PC-9 (cell line): ENCODE measurements at regions of chr1 and their contacts with region 1.

Region 1: DNA sequence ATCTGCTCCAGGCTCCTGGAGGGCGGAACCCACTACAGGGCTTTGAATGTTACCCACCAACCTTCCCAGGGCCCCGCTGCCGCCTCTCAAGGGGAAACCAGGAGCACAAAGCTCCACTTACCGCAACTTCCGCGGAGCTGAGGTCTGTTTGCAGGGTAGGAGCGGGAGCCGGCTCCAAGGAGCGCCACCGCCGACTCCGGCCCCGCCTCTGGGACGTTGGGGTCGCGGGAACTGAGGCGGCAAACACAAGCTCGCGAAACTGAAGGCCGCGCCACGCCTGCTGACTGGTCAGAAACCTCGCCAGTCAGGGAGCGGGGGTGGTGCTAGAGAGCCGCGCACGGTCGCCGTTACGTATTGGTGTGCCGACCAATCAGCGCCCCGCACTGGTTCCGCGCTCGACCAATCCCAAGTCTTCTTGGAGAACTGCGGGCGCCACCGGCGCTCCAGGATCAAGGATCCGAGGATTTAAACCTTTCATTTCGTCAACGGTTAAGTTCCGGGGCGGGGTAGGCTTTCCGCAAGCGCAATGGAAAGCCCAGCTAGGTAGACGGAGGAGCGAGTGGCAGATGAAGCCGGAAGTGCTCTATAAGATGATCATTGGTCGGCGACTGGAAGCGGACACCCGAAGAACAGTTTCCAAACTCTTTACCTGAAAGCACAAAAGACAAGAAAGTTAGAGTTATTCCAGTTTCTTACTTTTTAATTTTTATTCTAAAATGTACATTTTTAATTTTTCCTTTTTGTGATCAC is at the start of gene STIL:
- DNase-seq: peak; percentile 99
- H3K4me3 ChIP-seq: peak within 1 kb of the TSS; percentile 67
- H3K27ac ChIP-seq: peak within 1 kb of the TSS; percentile 87
- H3K4me1 ChIP-seq: peaks cover 12% of the 10 kb centered on the region
- H3K27me3 ChIP-seq: no peaks in the 10 kb centered on the region
- CTCF ChIP-seq: no peak
- total RNA-seq, gene STIL: 35.8 and 37.0 TPM in 2 replicates

Region 2: GRCh38 chr1:47333922-47334764 is 20.1 kb after region 1 on chr1:
- CTCF ChIA-PET with region 1: interaction called, 6 read pairs
- POLR2A ChIA-PET with region 1: interaction called, 38 read pairs
- intact Hi-C with region 1: loop called (anchors 1 kb)
- DNase-seq: peak; percentile 62 to 77
- H3K4me3 ChIP-seq: peak overlapping the region; percentile 96
- H3K27ac ChIP-seq: peak overlapping the region; percentile 93
- H3K4me1 ChIP-seq: peaks cover 30% of the 10 kb centered on the region
- H3K27me3 ChIP-seq: no peaks in the 10 kb centered on the region
- CTCF ChIP-seq: no peak; the same call in 1 of the 2 replicates

Region 3: DNA sequence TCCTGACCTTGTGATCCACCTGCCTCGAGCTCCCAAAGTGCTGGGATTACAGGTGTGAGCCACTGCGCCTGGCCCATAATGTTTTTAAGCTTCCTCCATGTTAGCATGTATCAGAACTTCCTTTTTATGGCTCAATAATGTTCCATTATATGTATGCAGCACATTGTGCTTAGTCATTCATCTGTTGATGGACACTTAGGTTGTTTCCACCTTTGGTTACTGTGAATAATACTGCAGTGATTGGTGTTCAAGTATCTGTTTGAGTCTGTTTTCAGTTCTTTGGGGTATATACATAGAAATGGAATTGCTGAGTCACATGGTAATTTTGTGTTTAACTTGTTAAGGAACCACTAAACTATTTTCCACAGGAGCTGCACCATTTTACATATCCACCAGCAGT is 37.2 kb after region 1 on chr1:
- CTCF ChIA-PET with region 1: no interaction called
- POLR2A ChIA-PET with region 1: interaction called, 10 read pairs
- intact Hi-C with region 1: no loop called
- DNase-seq: no peak
- H3K4me3 ChIP-seq: no peak overlapping the region
- H3K27ac ChIP-seq: peak overlapping the region; percentile 52
- H3K4me1 ChIP-seq: 0 out of 2 replicates have a peak, but pooled peaks cover 4% of the 10 kb centered on the region
- H3K27me3 ChIP-seq: no peaks in the 10 kb centered on the region
- CTCF ChIP-seq: no peak

Region 4: DNA sequence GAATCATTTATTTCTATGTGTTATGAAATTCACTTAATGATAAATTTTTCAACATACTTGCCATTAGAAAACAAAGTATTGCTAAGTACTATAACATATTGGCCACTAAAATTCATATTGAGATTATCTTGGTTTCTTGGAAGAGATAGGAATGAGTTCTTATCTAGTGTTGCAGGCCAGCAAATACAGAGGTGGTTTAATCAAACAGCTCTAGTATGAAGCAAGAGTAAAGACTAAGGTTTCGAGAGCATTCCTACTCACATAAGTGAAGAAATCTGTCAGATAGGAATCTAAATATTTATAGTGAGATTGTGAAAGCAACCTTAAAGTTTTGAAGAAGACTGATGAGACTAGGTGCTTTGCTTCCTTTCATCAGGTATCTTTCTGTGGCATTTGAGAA is 64.1 kb after region 1 on chr1:
- CTCF ChIA-PET with region 1: no interaction called
- POLR2A ChIA-PET with region 1: no interaction called
- intact Hi-C with region 1: loop called (anchors 5 kb)
- DNase-seq: no peak
- H3K4me3 ChIP-seq: no peak overlapping the region
- H3K27ac ChIP-seq: no peak overlapping the region
- H3K4me1 ChIP-seq: no peaks in the 10 kb centered on the region
- H3K27me3 ChIP-seq: no peaks in the 10 kb centered on the region
- CTCF ChIP-seq: no peak

Region 5: DNA sequence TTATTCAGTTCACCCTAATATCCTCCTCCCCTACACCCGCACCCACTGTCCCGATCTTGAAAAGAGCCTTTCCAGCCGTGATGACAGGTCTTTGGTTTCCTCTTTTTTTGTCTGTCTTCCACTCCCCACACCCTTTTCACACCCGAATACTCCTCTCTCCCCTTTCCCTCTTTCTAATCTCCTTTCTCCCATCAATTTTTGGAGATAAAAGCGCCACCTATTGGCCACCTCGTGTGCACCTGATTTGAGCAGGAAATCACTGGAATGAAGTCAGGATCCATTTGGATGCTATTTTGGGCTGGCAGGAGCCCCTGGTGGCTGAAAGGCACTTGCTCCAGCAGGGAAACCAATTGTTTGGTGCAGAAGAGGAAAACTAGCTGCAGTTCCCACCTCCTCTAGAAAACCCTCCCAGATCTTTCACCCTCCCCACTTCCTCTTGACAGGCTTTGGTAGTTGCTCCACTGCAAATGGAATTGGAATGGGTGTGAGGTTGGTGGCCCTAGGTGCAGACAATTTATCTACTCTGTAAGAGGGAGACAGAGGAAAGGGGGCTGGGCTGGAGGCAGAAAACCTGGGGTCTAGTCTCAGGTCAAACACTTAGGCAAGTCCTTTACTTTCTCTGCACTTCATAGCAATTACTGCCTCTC is 110.4 kb after region 1 on chr1:
- CTCF ChIA-PET with region 1: interaction called, 3 read pairs
- POLR2A ChIA-PET with region 1: no interaction called
- intact Hi-C with region 1: loop called (anchors 5 kb)
- DNase-seq: peak; percentile 32 to 51
- H3K4me3 ChIP-seq: no peak overlapping the region
- H3K27ac ChIP-seq: no peak overlapping the region
- H3K4me1 ChIP-seq: no peaks in the 10 kb centered on the region
- H3K27me3 ChIP-seq: no peaks in the 10 kb centered on the region
- CTCF ChIP-seq: peak; percentile 81